Gastrocnemius medialis (tissue), 4 donors: ENCODE measurements at regions of chr12 and their contacts with region 1.

Region 1: GRCh38 chr12:98503592-98504367 is 11.6 kb upstream of the TMPO start:
- DNase-seq: peak; percentile 88 to 92
- ATAC-seq: peak; percentile 91 to 92
- H3K4me3 ChIP-seq: peak overlapping the region; percentile 57 to 70 (median 68)
- H3K27ac ChIP-seq: peak overlapping the region; percentile 87 to 96 (median 92)
- H3K4me1 ChIP-seq: no peaks in the 10 kb centered on the region
- H3K27me3 ChIP-seq: no peaks in the 10 kb centered on the region
- CTCF ChIP-seq: no peak
- POLR2A ChIP-seq: peak; percentile 24 to 45

Region 2: DNA sequence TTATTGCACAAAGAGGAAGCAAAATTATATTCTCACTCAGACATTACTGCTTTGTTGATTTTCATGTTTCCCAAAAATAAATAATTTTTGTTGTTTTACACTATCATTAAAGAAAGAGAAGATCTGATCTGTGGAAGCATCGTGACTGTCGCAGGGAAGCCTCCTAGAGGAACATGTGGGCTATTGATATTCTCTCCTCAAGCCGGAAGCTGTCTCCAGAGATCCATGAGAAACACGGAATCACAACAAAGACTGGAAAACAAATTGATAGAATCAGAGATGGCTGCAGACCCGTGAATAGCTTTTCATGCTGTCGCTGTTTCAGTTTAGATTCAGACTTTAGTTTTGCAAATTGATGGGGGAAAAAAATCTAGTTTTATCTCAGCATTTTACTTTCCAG is 223.6 kb before region 1 on chr12:
- in situ Hi-C with region 1: no loop called
- intact Hi-C with region 1: no loop called
- DNase-seq: no peak
- ATAC-seq: no peak
- H3K4me3 ChIP-seq: no peak overlapping the region
- H3K27ac ChIP-seq: no peak overlapping the region
- H3K4me1 ChIP-seq: no peaks in the 10 kb centered on the region
- H3K27me3 ChIP-seq: no peaks in the 10 kb centered on the region
- CTCF ChIP-seq: no peak
- POLR2A ChIP-seq: no peak

Region 3: GRCh38 chr12:98532681-98533304 is 29.0 kb after region 1 on chr12:
- in situ Hi-C with region 1: no loop called
- intact Hi-C with region 1: loop called (anchors 1 kb)
- DNase-seq: no peak
- ATAC-seq: peak; percentile 58 to 67
- H3K4me3 ChIP-seq: no peak overlapping the region
- H3K27ac ChIP-seq: peak overlapping the region; percentile 69 to 75 (median 70)
- H3K4me1 ChIP-seq: peaks cover 13 to 21% of the 10 kb centered on the region in 2 donors
- H3K27me3 ChIP-seq: no peaks in the 10 kb centered on the region
- CTCF ChIP-seq: peak; percentile 38 to 64 (median 55)
- POLR2A ChIP-seq: no peak

Region 4: GRCh38 chr12:98593351-98594049 is 89.7 kb after region 1 on chr12 and contains the start of gene SLC25A3:
- in situ Hi-C with region 1: no loop called
- intact Hi-C with region 1: loop called (anchors 5 kb)
- DNase-seq: peak; percentile 95 to 98
- ATAC-seq: peak; percentile 92 to 95
- H3K4me3 ChIP-seq: peak within 1 kb of the TSS; percentile 82 to 96 (median 88)
- H3K27ac ChIP-seq: peak within 1 kb of the TSS; percentile 94 to 100 (median 96)
- H3K4me1 ChIP-seq: peaks cover 24 to 32% of the 10 kb centered on the region in 2 donors
- H3K27me3 ChIP-seq: no peaks in the 10 kb centered on the region
- CTCF ChIP-seq: no peak
- POLR2A ChIP-seq: peak; percentile 98
- total RNA-seq, gene SLC25A3: 870 to 1,994 (median 1,275) TPM

Region 5: GRCh38 chr12:98644711-98645402 is 141.1 kb after region 1 on chr12 and contains the starts of genes APAF1 and IKBIP:
- in situ Hi-C with region 1: no loop called
- intact Hi-C with region 1: loop called (anchors 2 kb)
- DNase-seq: peak; percentile 92 to 95
- ATAC-seq: peak; percentile 83 to 86
- H3K4me3 ChIP-seq: peak within 1 kb of the TSS; percentile 87 to 96 (median 90)
- H3K27ac ChIP-seq: peak within 1 kb of the TSS; percentile 85 to 90 (median 88)
- H3K4me1 ChIP-seq: peaks cover 20 to 24% of the 10 kb centered on the region in 2 donors
- H3K27me3 ChIP-seq: no peaks in the 10 kb centered on the region
- CTCF ChIP-seq: no peak
- POLR2A ChIP-seq: peak; percentile 92 to 95
- total RNA-seq, gene APAF1: 5.8 to 11.5 (median 7.0) TPM
- total RNA-seq, gene IKBIP: 0.78 to 3.7 (median 2.9) TPM